HEK293T (cell line): ENCODE measurements at regions of chr2 and their contacts with region 1.

Region 1: DNA sequence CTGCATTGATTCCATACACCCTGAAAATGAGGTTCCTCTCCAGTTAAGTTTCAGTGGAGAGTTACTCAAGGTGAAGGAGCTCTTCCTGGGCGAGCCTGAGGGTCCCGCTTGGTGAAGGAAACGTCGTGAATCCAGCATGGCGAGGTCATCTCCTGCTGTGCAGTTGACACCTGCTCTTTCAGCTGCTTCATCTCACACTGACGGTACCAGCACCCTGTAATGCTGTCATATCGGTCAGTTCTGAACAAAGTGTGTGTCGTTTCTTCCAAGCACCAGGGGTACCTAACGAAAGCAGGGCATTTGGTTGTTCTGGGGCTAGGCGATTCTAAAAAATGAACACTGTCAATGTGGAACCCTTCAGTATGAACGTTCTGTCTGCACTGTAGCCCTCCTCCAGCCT is 52.6 kb downstream of the ITGB1BP1 start:
- DNase-seq: no peak

Region 2: GRCh38 chr2:9142551-9143263 is 228.0 kb before region 1 on chr2:
- CTCF ChIA-PET with region 1: interaction called, 11 read pairs
- POLR2A ChIA-PET with region 1: no interaction called
- DNase-seq: peak; percentile 87